Transverse colon (tissue), 4 donors: ENCODE measurements at regions of chr1 and their contacts with region 1.

Region 1: DNA sequence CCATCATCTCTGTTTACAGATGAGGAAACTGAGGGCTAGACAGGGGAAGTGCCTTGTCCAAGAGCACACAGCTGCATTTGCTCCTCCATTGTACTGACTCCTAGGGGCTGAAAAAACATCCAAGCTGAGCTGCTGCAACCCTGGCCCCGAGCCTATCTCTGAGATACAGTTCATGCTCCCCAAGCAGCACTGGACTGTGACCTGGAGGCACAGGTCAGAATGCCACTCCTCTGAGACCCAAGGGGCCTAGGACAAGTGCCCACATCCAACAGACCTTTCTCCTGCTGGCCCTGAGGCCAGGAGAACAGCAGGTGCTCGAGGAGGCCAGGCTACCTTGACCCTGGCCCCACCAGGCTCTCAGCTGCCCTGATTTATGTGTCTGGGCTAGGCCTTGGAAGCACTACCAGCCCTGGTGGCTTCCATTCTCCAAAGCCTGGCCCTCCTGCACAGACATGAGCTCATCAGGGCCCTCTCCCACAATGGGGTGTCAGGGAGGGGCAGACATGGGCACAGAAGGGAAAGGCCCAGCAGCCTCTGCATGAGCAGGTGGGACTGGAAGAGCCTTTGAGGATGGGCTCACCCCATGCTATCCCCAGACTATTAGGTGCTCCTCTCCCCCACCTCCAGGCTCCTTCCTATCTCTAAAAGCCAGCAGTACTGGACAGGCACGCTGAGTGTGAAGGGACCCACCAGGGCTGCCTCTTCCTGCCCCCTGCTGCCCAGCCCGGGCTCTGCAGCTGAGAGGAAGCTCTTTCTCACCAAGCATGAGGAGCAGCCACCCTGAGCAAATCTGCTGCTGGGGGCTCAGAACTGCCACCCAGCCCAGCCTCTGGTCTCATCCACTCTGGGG is 18.8 kb downstream of the ADGRB2 start:
- DNase-seq: peak; percentile 78
- H3K4me3 ChIP-seq: no peak overlapping the region
- H3K27ac ChIP-seq: peak overlapping the region in 1 of 4 donors; percentile 21
- H3K4me1 ChIP-seq: no peaks in the 10 kb centered on the region
- H3K27me3 ChIP-seq: peaks cover 4% of the 10 kb centered on the region
- CTCF ChIP-seq: peak; percentile 58 to 71 (median 67)
- EP300 ChIP-seq: no peak
- POLR2A ChIP-seq: no peak

Region 2: GRCh38 chr1:29772584-29773100 is 1972.7 kb before region 1 on chr1:
- in situ Hi-C with region 1: no loop called
- intact Hi-C with region 1: loop called (anchors 10 kb)
- DNase-seq: no peak
- H3K4me3 ChIP-seq: no peak overlapping the region
- H3K27ac ChIP-seq: no peak overlapping the region
- H3K4me1 ChIP-seq: no peaks in the 10 kb centered on the region
- H3K27me3 ChIP-seq: peaks cover 16% of the 10 kb centered on the region
- CTCF ChIP-seq: no peak
- EP300 ChIP-seq: no peak
- POLR2A ChIP-seq: no peak

Region 3: DNA sequence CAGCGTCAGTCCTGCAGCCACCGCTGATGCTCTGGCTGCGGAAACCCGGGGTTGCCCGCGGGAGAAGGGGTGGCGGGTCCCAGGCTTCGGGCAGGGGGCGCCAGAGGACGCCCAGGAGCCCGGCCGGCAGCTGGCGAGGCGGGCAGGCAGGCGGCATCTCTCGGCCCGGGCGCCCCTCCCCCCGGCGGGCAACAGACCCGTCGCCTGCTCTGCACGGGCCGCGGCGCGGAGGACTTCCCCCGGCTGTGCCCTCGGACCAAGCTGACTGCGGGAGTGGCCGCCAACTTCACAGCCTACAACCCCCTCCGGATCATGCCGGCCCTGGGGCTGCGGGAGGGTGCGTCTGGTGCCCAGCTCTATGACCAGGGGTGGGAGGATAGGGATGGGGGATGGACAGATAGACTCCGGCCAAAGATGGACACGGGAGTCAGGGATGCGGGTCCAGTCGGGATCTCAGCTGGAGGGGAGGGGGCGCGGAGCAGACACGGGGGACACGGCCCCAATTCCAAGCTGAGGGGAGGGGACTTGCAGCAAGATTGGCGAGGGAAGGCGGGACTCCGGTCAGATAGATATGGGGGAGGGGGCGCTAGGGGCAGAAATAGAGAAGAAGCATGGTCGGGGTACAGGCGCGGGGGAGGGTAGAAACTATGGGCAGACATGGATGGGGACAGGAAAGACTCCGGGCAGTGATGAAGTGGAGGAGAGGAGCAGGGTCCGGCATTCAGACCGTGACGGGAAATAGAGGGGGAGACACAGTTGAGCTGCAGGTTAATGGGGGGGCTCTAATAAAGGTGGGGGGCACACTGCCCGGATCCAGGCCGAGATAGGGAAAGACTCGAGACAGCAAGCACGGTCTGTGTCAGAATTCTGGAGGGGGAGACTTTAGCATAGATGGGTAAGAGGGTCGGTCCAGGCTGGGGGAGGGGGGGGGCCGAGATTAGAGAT is 17.7 kb after region 1 on chr1:
- in situ Hi-C with region 1: no loop called
- intact Hi-C with region 1: no loop called
- DNase-seq: peak; percentile 71
- H3K4me3 ChIP-seq: peak overlapping the region; percentile 32 to 61 (median 54)
- H3K27ac ChIP-seq: no peak overlapping the region
- H3K4me1 ChIP-seq: peaks cover 12 to 43% (median 31%) of the 10 kb centered on the region in 4 donors
- H3K27me3 ChIP-seq: peaks cover 76% of the 10 kb centered on the region
- CTCF ChIP-seq: peak in 4 of 5 experiments; percentile 40 to 66 (median 46)
- EP300 ChIP-seq: no peak
- POLR2A ChIP-seq: no peak